AG04450 (cell line): ENCODE measurements at regions of chr17 and their contacts with region 1.

Region 1: GRCh38 chr17:9522074-9522473 is 53.5 kb downstream of the STX8 start:
- DNase-seq: peak; percentile 18
- H3K4me3 ChIP-seq: no peak overlapping the region
- H3K27ac ChIP-seq: no peak overlapping the region
- H3K27me3 ChIP-seq: no peaks in the 10 kb centered on the region
- CTCF ChIP-seq: peak; percentile 62

Region 2: GRCh38 chr17:8991514-8992285 is 530.4 kb before region 1 on chr17:
- CTCF ChIA-PET with region 1: interaction called, 17 read pairs
- POLR2A ChIA-PET with region 1: no interaction called
- DNase-seq: peak; percentile 20
- H3K4me3 ChIP-seq: no peak overlapping the region
- H3K27ac ChIP-seq: no peak overlapping the region
- H3K27me3 ChIP-seq: no peaks in the 10 kb centered on the region
- CTCF ChIP-seq: peak; percentile 84

Region 3: DNA sequence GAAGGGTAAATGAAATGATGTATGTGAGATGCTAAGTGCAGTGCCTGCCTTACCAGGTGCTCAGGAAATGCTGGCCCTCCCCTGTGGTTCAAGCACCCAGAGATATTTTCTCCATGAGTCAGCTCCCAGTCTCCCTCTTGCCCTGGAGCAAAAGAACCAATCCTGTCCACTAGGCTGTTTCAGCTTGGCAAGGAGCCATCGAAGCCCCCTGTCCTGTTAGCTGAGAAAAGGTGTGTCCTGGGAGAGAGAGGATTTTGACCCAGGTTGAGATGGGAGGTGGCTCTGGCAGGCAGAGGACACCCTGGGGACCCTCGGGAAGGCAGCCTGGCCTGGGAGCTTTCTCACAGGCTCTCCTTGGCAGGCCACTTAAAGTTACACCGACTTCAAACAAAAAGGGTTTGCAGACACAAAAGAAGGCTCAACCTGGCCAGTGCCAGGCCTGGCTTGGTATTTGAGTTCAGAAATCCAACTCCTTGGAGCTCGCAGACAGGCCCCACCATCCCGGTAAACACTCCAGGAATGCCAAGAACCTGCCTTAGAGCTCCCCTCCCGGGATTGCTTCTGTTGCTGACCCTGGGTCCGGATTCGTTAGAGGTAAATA is 471.2 kb before region 1 on chr17:
- CTCF ChIA-PET with region 1: interaction called, 10 read pairs
- POLR2A ChIA-PET with region 1: no interaction called
- DNase-seq: no peak
- H3K4me3 ChIP-seq: no peak overlapping the region
- H3K27ac ChIP-seq: no peak overlapping the region
- H3K27me3 ChIP-seq: no peaks in the 10 kb centered on the region
- CTCF ChIP-seq: no peak

Region 4: GRCh38 chr17:9115446-9116191 is 406.5 kb before region 1 on chr17:
- CTCF ChIA-PET with region 1: interaction called, 11 read pairs
- POLR2A ChIA-PET with region 1: no interaction called
- DNase-seq: no peak
- H3K4me3 ChIP-seq: peak overlapping the region; percentile 34; the same call in 1 of the 2 replicates
- H3K27ac ChIP-seq: no peak overlapping the region
- H3K27me3 ChIP-seq: no peaks in the 10 kb centered on the region
- CTCF ChIP-seq: peak; percentile 7; the same call in 1 of the 2 replicates